ENCODE measurements at regions of chr1 and their contacts with region 1.

Region 1: DNA sequence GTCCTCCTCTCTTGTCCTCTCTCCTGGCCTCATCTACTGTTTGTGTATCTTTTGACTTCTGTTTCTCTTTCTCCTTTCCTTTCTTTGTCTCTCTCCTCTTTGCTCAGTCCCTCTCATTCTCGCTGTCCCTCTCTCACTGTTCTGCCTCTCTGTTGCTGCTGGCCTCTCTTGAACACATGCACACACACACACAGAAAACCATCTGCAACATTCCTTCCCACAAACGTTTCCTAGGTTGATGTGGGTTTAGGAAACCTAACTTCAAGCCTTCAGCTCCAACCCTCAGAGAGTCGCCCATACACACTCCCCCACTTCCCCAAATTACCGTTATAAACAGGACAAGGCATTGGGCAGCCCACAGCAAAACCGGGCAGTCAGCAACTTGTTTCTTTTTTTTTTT is 10.9 kb upstream of the SSBP3 start:
- DNase-seq: no peak
- ATAC-seq: no peak
- H3K4me3 ChIP-seq: no peak overlapping the region
- H3K4me1 ChIP-seq: peaks cover 11% of the 10 kb centered on the region
- CTCF ChIP-seq: no peak

Region 2: DNA sequence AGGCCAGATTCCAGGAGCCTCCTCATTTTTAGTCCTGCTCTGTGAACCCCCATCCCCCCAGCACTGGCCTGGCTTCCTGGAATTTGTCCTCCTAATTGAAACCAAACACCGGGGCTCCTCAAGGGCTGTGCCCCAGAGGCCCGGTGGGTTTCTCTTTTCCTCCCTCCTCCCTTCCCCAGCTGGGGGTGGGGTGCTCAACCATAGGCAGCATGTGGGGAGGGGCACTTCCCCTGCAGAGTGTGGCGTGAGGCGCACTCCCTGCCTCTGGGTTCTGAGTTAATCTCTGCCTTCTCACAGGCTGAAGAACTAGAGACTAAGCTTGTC is 63.4 kb after region 1 on chr1:
- intact Hi-C with region 1: loop called in 1 of 2 experiments (anchors 5 kb)
- DNase-seq: no peak
- ATAC-seq: peak; percentile 8
- H3K4me3 ChIP-seq: no peak overlapping the region
- H3K4me1 ChIP-seq: peaks cover 12% of the 10 kb centered on the region
- CTCF ChIP-seq: no peak

Measured in mucosa of descending colon (tissue), 3 donors.